T-cell (primary cell): ENCODE measurements at regions of chr19 and their contacts with region 1.

Region 1: GRCh38 chr19:39237200-39238184 is 7.3 kb downstream of the IFNL3 start:
- DNase-seq: peak in 25 of 35 experiments; percentile 12 to 52 (median 20)
- ATAC-seq: peak; percentile 68 to 85 (median 82)
- H3K4me3 ChIP-seq: peak overlapping the region in 1 of 2 donors; percentile 32
- H3K4me3 Mint-ChIP-seq: peak overlapping the region; percentile 74 to 78 (median 74)
- H3K27ac ChIP-seq: peak overlapping the region; percentile 58
- H3K27ac Mint-ChIP-seq: peak overlapping the region; percentile 90 to 92
- H3K4me1 ChIP-seq: peaks cover 0 to 27% of the 10 kb centered on the region in 2 experiments
- H3K4me1 Mint-ChIP-seq: peaks cover 29 to 33% (median 29%) of the 10 kb centered on the region in 3 donors
- H3K27me3 ChIP-seq: no peaks in the 10 kb centered on the region
- H3K27me3 Mint-ChIP-seq: no peaks in the 10 kb centered on the region

Region 2: GRCh38 chr19:39187559-39187957 is 49.9 kb before region 1 on chr19:
- CTCF ChIA-PET with region 1: interaction called in 1 of 2 experiments, 10 read pairs
- POLR2A ChIA-PET with region 1: no interaction called
- DNase-seq: no peak
- ATAC-seq: no peak
- H3K4me3 ChIP-seq: no peak overlapping the region
- H3K4me3 Mint-ChIP-seq: no peak overlapping the region
- H3K27ac ChIP-seq: no peak overlapping the region
- H3K27ac Mint-ChIP-seq: no peak overlapping the region
- H3K4me1 ChIP-seq: no peaks in the 10 kb centered on the region
- H3K4me1 Mint-ChIP-seq: no peaks in the 10 kb centered on the region
- H3K27me3 ChIP-seq: peaks cover 0 to 27% of the 10 kb centered on the region in 2 experiments
- H3K27me3 Mint-ChIP-seq: peaks cover 5 to 26% of the 10 kb centered on the region in 2 donors

Region 3: GRCh38 chr19:39254531-39255345 is 17.2 kb after region 1 on chr19:
- CTCF ChIA-PET with region 1: no interaction called
- POLR2A ChIA-PET with region 1: no interaction called
- DNase-seq: no peak
- ATAC-seq: no peak
- H3K4me3 ChIP-seq: no peak overlapping the region
- H3K4me3 Mint-ChIP-seq: no peak overlapping the region
- H3K27ac ChIP-seq: no peak overlapping the region
- H3K27ac Mint-ChIP-seq: no peak overlapping the region
- H3K4me1 ChIP-seq: peaks cover 0 to 4% of the 10 kb centered on the region in 2 experiments
- H3K4me1 Mint-ChIP-seq: peaks cover 3 to 12% (median 7%) of the 10 kb centered on the region in 3 donors
- H3K27me3 ChIP-seq: peaks cover 0 to 12% of the 10 kb centered on the region in 2 experiments
- H3K27me3 Mint-ChIP-seq: peaks cover 0 to 5% of the 10 kb centered on the region in 2 donors